Activated naive CD4-positive, alpha-beta T cell treated with anti-CD3 and anti-CD28 coated beads for 36 hours (primary cell): ENCODE measurements at regions of chr17 and their contacts with region 1.

Region 1: DNA sequence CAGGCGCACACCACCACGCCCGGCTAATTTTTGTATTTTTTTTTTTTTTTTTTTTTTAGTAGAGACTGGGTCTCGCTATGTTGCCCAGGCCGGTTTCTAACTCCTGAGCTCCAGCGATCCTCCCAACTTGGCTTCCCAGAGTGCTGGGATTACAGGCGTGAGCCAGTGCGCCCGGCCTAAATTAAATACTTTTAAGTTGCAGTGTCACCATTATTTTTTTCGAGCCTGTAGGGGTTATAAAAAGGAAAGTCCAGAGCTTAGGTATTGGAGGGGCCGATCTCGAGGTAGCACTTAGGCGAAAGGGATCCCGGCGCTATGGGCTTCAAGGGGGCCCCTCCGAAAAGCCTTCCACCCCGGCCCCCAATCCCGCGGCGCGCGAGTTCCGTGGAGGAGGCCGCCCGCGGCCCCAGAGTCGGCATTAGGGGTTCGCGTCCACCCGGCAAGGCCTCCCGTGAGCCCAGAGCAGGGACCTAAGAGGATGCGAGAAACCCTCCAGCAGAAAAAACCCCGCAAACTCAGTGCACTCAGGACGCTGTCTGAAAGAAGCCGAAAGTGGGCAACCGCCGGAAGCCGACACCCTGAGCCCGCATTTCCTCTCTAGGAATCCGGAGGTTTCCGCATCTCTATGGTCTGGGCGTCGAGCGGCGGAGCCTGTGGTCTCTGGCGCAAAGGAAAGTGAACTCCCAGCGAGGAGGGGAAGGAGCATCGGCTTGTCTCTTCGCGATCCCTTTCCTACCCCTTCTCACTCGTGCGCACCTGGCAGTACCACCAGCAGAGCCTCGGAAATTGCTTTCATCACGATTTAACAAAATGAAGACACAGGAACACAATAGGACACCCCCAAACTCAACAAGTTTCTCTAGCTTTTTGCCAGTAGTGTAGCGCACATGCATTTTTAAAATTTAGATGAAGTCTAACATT is 14.1 kb upstream of the RGS9 start:
- DNase-seq: peak; percentile 90
- H3K4me3 Mint-ChIP-seq: peak overlapping the region; percentile 78
- H3K27ac Mint-ChIP-seq: peak overlapping the region; percentile 91
- H3K4me1 Mint-ChIP-seq: peaks cover 25% of the 10 kb centered on the region
- H3K27me3 Mint-ChIP-seq: peaks cover 5% of the 10 kb centered on the region

Region 2: GRCh38 chr17:64580384-64581315 is 542.4 kb before region 1 on chr17:
- CTCF ChIA-PET with region 1: no interaction called
- intact Hi-C with region 1: loop called (anchors 5 kb)
- DNase-seq: no peak
- H3K4me3 Mint-ChIP-seq: no peak overlapping the region
- H3K27ac Mint-ChIP-seq: peak overlapping the region; percentile 82
- H3K4me1 Mint-ChIP-seq: peaks cover 13% of the 10 kb centered on the region
- H3K27me3 Mint-ChIP-seq: no peaks in the 10 kb centered on the region

Region 3: DNA sequence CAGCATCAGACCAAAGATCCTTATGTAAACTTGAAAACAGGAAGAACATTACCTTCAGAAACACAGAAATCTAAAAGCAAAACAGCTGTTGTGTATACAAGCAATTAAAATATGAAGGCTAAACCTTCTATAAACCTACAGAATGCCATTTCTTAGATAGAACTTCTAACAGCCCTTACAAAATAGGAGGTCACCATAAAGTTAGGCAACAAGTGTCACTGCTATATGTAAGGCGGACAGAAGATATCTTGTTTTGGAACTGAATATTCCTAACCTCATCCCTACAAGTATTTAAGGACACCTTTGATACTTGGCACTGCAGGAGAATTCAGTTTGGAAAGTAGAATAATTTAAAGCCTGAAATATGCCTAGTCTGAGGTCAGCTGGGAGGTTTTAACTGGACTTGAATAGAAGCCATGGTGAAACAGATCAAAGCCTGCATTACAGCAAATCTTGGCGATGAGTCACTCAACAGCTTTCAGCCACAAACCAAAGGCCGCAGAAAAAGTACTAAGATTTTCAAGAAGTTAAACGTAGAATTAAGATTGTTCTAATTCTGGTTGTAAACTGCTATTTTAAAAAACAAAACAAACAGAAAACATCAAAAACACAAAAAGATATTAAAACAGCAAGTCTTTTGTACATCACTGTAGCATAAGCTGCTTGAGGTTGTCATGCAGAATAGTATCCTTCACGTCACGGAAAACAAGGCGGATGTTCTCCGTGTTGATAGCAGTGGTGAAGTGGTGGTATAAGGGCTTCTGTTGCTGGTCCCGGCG is 109.3 kb before region 1 on chr17:
- CTCF ChIA-PET with region 1: no interaction called
- intact Hi-C with region 1: no loop called
- DNase-seq: peak; percentile 59
- H3K4me3 Mint-ChIP-seq: no peak overlapping the region
- H3K27ac Mint-ChIP-seq: no peak overlapping the region
- H3K4me1 Mint-ChIP-seq: peaks cover 49% of the 10 kb centered on the region
- H3K27me3 Mint-ChIP-seq: no peaks in the 10 kb centered on the region

Region 4: GRCh38 chr17:65027305-65027704 is 95.8 kb before region 1 on chr17:
- CTCF ChIA-PET with region 1: no interaction called
- intact Hi-C with region 1: loop called (anchors 1 kb)
- DNase-seq: peak; percentile 77
- H3K4me3 Mint-ChIP-seq: peak overlapping the region; percentile 58
- H3K27ac Mint-ChIP-seq: peak overlapping the region; percentile 94
- H3K4me1 Mint-ChIP-seq: peaks cover 80% of the 10 kb centered on the region
- H3K27me3 Mint-ChIP-seq: no peaks in the 10 kb centered on the region

Region 5: GRCh38 chr17:65137021-65137991 is 14.2 kb after region 1 on chr17 and contains the start of gene RGS9:
- CTCF ChIA-PET with region 1: interaction called, 3 read pairs
- intact Hi-C with region 1: loop called (anchors 1 kb)
- DNase-seq: peak; percentile 75
- H3K4me3 Mint-ChIP-seq: peak within 1 kb of the TSS; percentile 59
- H3K27ac Mint-ChIP-seq: no peak within 1 kb of the TSS
- H3K4me1 Mint-ChIP-seq: peaks cover 15% of the 10 kb centered on the region
- H3K27me3 Mint-ChIP-seq: peaks cover 11% of the 10 kb centered on the region
- total RNA-seq, gene RGS9: 1.2 to 1.6 TPM

Region 6: DNA sequence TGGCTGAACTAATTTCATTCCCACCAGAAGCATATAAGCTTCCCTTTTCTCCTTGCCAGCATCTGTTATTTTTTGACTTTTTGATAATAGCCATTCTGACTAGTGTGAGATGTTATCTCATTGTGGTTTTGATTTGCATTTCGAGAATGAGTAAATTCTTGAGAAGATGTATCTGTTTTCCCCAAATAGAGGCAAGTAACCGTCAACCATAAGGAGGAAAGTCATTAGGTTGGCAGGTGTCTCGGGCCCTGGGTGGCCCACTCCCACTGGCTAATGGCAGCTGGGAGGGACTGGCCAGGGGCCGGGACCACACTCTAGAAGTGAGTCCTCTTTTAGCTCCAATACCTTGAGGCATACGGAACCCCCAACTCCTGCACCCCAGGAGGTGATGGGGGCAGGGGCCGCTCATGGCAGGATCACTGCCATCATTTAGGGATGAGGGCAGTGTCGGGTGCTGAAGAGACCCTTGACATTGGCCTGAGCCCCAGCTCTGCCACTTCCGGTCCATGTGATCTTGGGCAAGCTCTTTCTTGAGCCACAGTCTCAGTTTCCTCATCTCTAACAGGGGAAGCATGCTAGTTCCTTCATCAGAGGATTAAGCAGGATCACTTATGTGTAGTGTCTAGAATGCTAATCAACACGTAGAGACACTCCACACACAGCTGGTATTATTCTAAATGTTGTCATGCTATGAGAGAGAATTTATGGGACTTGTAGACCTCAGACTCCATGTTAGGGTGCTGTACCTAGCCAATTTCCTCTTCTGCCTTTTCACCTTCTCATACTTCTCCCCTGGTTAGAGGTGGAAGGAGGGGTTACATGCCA is 58.4 kb after region 1 on chr17:
- CTCF ChIA-PET with region 1: no interaction called
- intact Hi-C with region 1: loop called (anchors 1 kb)
- DNase-seq: peak; percentile 56
- H3K4me3 Mint-ChIP-seq: no peak overlapping the region
- H3K27ac Mint-ChIP-seq: peak overlapping the region; percentile 50
- H3K4me1 Mint-ChIP-seq: peaks cover 32% of the 10 kb centered on the region
- H3K27me3 Mint-ChIP-seq: no peaks in the 10 kb centered on the region

Region 7: DNA sequence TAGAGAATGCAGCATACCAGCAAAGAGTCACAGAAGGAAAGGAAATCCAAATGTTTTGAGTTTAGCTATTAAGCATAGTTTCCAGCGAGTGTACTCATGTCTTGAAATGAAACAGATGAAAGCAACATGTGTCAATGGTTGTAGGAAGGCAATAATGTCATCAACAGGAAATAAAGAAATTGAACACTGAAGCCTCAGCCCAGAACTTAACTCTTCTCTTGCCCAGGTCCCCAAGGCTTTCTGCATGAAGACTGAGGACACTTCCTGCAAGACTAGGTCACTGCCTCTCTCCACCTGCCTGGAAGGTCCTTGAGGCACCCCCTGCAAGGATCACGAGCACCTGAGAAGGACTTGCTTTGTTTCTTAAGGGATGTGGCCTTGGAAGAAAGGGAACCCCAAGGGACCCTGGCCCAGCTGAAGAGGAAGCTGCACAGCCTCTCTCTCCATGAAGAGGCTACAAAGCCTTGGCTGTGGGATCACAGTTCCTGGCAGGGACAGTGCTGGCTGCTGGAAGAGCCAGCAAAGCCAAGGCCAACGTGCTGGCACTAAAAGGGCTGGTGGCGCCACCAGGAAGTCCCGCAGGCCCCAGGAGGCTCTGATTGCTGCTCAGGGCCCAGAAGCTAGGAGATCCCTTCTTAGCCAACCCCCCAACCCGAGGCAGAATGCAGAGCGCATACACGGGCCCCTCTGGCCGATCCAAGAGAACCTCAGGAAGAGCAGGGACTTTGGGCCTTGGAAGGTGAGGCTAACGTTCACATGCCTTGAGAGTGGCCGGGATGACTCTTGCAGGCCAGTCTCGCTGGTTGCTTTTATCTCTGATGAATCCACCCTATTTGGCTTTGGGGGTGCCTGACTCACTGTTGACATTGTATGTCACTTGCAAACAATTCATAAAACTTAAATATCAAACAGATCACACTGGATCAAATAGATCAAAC is 461.8 kb after region 1 on chr17:
- CTCF ChIA-PET with region 1: no interaction called
- intact Hi-C with region 1: loop called (anchors 2 kb)
- DNase-seq: peak; percentile 18
- H3K4me3 Mint-ChIP-seq: no peak overlapping the region
- H3K27ac Mint-ChIP-seq: peak overlapping the region; percentile 51
- H3K4me1 Mint-ChIP-seq: peaks cover 47% of the 10 kb centered on the region
- H3K27me3 Mint-ChIP-seq: no peaks in the 10 kb centered on the region